ENCODE measurements at regions of chr2 and their contacts with region 1.

Region 1: GRCh38 chr2:3461801-3462492 is 57.4 kb downstream of the ADI1 start:
- DNase-seq: peak; percentile 64
- H3K4me3 Mint-ChIP-seq: peak overlapping the region; percentile 14
- H3K27ac Mint-ChIP-seq: peak overlapping the region; percentile 80
- H3K4me1 Mint-ChIP-seq: peaks cover 15% of the 10 kb centered on the region
- H3K27me3 Mint-ChIP-seq: no peaks in the 10 kb centered on the region

Region 2: DNA sequence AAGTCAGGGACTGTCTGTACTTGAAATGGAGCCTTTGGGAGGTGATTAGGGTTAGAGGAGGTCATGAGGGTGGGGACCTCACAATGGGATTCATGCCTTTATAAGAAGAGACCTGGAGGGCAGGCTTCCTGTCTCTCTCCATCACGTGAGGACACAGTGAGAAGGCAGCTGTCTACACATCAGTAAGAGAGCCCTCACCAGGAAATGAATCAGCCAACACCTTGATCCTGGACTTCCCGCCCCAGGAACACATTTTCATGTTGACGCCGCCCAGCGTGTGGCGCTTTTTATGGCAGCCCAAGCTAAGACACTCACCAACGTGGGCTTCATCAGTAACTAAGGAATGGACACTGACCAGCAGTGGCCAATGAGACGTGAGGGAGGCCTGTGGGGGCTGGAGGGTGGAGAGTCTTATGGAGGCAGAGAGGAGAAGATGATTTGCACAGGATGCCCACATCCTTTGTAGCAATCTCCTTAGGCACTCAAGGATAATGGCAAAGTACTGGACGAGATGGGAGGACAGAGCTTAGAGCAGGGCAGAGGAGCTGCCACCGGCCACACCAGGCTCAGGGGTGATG is 247.0 kb before region 1 on chr2:
- CTCF ChIA-PET with region 1: no interaction called
- POLR2A ChIA-PET with region 1: no interaction called
- DNase-seq: no peak
- H3K4me3 Mint-ChIP-seq: no peak overlapping the region
- H3K27ac Mint-ChIP-seq: peak overlapping the region; percentile 9
- H3K4me1 Mint-ChIP-seq: peaks cover 4% of the 10 kb centered on the region
- H3K27me3 Mint-ChIP-seq: no peaks in the 10 kb centered on the region

Region 3: DNA sequence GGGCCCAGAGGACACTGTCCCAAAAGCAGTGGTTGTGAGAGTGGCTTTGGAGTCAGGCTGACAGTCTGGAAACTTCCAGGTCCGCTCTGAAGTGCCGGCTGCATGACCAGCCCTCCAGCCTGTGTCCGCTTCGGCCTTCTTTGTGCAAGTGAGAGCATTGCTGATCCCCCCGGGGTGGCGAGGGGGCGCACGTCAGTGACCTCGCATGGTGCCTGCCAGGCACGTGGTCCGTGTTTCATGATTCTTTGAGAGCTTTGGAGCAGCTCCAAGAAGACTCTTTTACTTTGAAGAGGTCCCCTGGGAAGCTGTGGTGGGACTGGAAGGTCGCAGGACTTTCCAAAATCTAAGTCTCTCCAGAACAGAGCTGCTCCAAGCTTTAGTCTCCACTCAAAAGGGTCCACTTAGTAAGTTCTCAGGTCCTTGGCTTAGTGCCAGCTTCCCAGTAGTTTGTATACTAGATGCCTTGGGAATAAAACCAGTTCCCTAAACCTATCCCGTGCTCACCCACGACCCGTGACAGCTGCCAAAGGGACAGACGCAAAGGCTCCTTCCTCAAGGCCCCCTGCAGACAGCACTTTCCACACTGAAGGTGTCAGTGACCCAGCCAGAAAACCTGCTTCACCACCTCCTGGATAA is 11.5 kb before region 1 on chr2:
- CTCF ChIA-PET with region 1: interaction called, 14 read pairs
- POLR2A ChIA-PET with region 1: no interaction called
- DNase-seq: no peak
- H3K4me3 Mint-ChIP-seq: no peak overlapping the region
- H3K27ac Mint-ChIP-seq: no peak overlapping the region
- H3K4me1 Mint-ChIP-seq: no peaks in the 10 kb centered on the region
- H3K27me3 Mint-ChIP-seq: no peaks in the 10 kb centered on the region

Region 4: DNA sequence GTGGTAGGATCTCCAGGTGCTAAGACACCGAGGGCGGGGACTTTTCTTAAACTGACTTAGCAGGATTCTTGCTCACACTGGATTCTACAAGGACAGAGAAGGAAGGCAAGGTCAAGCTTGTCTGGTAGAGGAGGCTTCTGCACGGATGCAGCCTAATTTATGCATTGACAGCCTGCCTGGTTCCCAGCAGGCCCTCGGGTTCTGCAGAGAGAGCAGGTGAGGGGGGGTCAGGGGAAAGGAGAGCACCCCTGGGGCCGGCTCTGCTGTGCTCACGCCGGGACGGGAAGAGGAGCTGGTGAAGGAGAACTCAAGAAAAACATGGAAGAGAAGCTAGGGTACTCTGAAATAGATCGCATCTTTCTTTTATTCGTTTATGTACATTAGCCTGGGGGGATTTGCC is 11.0 kb after region 1 on chr2:
- CTCF ChIA-PET with region 1: interaction called, 10 read pairs
- POLR2A ChIA-PET with region 1: no interaction called
- DNase-seq: no peak
- H3K4me3 Mint-ChIP-seq: no peak overlapping the region
- H3K27ac Mint-ChIP-seq: no peak overlapping the region
- H3K4me1 Mint-ChIP-seq: no peaks in the 10 kb centered on the region
- H3K27me3 Mint-ChIP-seq: no peaks in the 10 kb centered on the region

Measured in activated CD4-positive, alpha-beta T cell treated with anti-CD3 and anti-CD28 coated beads, Interleukin-2, amount 10 ng/mL, durations not matched to agents 7 days and 5 days (primary cell).